ENCODE measurements at regions of chr15 and their contacts with region 1.

Region 1: DNA sequence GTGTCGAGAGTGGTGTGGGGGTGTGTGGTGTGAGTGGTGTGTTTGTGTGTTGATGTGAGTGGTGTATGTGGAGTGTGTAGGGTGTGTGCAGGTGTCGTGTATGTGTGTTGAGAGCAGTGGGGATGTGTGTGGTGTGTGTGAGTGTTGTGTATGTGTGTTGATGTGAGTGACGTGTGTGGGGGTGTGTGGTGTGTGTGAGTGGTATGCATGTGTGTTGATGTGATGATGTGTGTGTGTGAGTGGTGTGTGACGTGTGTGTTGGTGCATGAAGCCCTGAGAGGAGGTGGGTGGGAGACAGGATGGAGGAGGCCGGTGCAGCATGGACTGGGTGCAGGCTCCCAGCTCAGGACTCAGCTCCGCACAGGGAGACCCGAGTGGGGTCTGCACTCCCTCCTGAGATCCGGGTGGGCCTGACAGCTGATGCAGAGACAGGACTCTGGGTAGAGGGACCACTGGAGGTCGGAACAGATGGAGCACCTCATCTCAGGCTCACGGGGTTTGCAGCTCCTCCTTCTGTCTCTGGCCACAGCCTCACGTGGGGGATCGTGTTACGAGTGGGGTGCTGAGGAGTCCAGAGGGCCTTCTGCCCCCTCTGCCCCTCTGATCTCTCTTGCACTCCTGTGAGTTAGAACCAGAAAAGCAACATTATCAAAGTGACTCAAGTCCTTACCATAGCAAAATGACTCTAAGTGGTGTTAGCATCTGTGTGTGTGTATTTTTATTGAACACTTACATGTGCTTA is 41.3 kb downstream of the ARNT2 start:
- DNase-seq: no peak
- H3K4me3 ChIP-seq: no peak overlapping the region
- H3K27ac ChIP-seq: no peak overlapping the region
- H3K4me1 ChIP-seq: no peaks in the 10 kb centered on the region
- H3K27me3 ChIP-seq: peaks cover 40% of the 10 kb centered on the region
- CTCF ChIP-seq: no peak

Region 2: GRCh38 chr15:80580106-80580505 is 134.6 kb after region 1 on chr15:
- intact Hi-C with region 1: no loop called
- DNase-seq: no peak
- H3K4me3 ChIP-seq: no peak overlapping the region
- H3K27ac ChIP-seq: no peak overlapping the region
- H3K4me1 ChIP-seq: no peaks in the 10 kb centered on the region
- H3K27me3 ChIP-seq: peaks cover 10% of the 10 kb centered on the region
- CTCF ChIP-seq: no peak

Region 3: DNA sequence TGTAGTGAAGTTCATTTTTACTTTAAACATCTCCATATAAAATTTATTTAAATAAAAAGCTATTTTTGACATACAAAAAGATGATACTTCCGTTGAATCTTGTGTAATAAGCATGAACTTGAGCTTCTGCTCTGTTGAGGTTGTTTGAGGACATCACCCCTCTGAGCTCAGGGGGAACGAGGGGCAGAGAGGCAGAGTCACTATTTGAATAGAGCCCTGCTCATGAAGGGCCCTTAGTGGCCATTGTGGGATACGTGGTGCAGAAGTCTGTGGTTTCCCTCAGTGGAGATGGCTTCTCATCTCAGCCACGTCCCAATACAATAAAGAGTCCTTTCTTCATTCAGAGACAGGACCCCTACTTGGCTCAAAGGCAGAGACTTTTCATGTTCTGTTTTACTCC is 344.3 kb after region 1 on chr15:
- intact Hi-C with region 1: loop called (anchors 10 kb)
- DNase-seq: no peak
- H3K4me3 ChIP-seq: no peak overlapping the region
- H3K27ac ChIP-seq: no peak overlapping the region
- H3K4me1 ChIP-seq: no peaks in the 10 kb centered on the region
- H3K27me3 ChIP-seq: peaks cover 48% of the 10 kb centered on the region
- CTCF ChIP-seq: no peak